Posterior cingulate gyrus (tissue), 11 donors: ENCODE measurements at regions of chrX and their contacts with region 1.

Region 1: GRCh38 chrX:30570505-30570904 is 7.1 kb downstream of the TASL start:
- DNase-seq: no peak

Region 2: DNA sequence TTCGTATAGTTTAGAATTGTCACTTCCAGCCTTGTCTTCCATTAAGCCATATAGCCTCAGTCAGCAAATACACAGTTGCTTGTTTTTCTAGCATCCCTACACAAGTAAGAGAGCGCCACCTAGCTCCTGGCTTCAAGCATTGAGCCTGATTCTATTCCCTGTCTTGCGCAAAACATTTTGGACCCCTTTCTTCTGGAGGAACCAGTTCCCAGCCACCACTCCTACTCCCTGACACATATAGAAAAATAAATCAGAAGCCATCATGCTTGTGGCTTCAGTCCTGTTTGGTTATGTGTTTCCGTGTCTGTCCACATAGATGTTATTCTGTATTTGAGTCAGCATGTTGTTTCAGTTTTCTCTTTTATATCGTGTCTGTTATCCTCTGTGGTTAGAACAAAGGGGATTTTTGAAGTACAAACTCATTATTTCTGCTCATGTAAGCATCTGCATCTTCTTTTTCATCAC is 142.6 kb after region 1 on chrX:
- intact Hi-C with region 1: loop called (anchors 2 kb)
- DNase-seq: peak in 5 of 10 donors; percentile 22 to 35 (median 30)